ENCODE measurements at regions of chr3 and their contacts with region 1.

Region 1: DNA sequence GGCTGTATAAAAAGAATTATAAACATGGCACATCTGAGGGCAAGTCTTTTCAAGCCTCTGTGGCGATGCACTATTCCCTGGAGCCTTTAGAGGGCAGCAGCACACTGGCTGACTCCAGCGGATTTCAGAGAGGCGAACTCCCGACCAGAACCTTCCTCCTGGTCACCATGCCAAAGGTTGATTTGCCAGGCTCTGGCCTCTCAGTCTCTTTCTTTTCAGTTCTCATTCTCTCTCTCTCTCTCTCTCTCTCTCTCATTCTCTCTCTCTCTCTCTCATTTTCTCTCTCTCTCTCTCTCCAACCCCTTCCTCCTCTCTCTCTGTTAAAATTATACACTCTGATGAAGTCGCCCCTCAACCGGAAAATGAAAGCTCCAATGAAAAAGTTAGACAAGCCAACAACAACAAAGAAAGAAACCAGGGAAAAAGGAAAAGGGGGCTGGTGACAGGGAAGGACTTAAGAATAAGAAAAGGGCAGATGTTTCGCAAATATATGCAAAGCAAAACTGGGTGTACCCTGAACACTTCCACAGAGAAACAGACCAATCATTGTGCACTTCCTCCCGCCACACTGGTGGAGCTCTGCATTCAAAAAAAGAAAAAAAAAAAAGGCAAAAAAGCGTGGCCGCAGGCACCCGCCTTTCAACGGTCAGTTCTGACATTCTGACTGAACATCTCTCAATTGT is 90.2 kb downstream of the TIGIT start:
- DNase-seq: peak; percentile 70 to 80
- ATAC-seq: peak; percentile 84 to 94
- H3K4me3 ChIP-seq: peak overlapping the region; percentile 35 to 61 (median 49)
- H3K27ac ChIP-seq: peak overlapping the region; percentile 69 to 87 (median 75)
- H3K4me1 ChIP-seq: peaks cover 56 to 57% of the 10 kb centered on the region in 2 donors
- H3K27me3 ChIP-seq: no peaks in the 10 kb centered on the region
- CTCF ChIP-seq: peak; percentile 87 to 96 (median 91)
- POLR2A ChIP-seq: peak in 1 of 2 donors; percentile 10

Region 2: DNA sequence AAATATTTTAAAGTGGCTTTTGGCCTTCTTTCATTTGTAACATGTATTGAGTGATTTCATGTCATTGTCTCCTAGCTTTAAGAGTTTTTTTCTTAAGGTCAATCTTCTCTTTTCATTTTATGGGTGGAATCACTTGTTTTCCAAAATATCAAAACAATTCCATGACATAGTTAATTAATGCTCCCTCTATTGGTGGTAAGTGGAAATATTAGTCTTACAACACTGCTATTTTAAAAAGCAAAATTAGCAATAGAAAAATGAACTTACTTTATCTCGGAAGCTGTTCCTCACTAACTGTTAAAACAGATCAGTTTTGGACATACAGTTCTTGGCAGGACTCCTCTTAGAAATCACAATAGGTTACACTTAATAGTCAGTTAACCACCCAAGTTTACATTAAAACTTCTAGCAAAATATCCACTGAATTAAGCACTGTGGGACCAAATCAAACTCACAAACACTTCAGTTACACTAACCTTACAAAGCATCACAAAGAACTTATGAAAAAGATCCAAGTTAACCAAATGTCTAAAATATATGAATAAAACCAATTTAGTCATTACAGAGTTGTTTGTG is 47.8 kb before region 1 on chr3:
- in situ Hi-C with region 1: no loop called
- intact Hi-C with region 1: no loop called
- DNase-seq: no peak
- ATAC-seq: no peak
- H3K4me3 ChIP-seq: no peak overlapping the region
- H3K27ac ChIP-seq: no peak overlapping the region
- H3K4me1 ChIP-seq: peaks cover 0 to 9% of the 10 kb centered on the region in 2 donors
- H3K27me3 ChIP-seq: no peaks in the 10 kb centered on the region
- CTCF ChIP-seq: peak in 2 of 5 experiments; percentile 22 to 41
- POLR2A ChIP-seq: no peak

Region 3: DNA sequence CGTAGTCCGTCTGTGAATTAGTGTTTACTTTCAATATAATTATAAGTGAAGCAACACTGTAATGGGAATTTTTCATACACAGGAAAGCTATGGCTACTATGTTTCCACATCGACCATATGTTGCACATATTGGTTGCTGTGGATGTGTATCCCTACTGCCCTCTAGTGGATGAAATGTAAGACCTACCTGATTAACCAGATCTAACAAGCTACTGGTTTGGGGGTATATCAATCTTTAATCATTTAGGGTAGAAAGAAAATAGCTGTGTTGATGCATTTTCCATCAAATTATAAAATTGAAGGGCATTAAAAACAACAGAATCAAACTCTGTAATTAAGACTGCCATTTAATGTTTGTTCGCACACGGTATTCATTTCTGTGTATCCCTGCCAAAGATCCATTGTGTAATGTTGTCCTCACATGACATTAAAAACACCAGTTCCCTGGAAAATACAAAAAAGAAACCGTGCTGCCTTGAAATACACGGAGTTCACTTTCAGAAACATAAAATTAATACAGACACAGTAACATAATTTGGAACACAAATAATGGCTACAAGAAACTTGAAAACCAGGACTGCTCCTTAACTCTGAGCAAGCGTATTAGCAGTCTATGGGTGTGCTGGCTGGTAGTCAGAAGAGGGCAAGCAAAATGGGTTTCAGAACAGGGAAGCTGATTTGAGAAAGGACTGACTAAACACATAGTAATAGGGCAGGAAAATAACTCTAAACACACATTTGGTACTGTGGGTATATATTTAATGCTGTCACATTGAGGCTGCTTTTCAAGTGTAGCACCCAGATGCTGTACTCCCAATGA is 34.9 kb after region 1 on chr3:
- in situ Hi-C with region 1: no loop called
- intact Hi-C with region 1: loop called (anchors 2 kb)
- DNase-seq: no peak
- ATAC-seq: peak; percentile 78 to 90
- H3K4me3 ChIP-seq: peak overlapping the region; percentile 12 to 48 (median 20)
- H3K27ac ChIP-seq: peak overlapping the region; percentile 53 to 79 (median 72)
- H3K4me1 ChIP-seq: peaks cover 83 to 93% of the 10 kb centered on the region in 2 donors
- H3K27me3 ChIP-seq: no peaks in the 10 kb centered on the region
- CTCF ChIP-seq: peak; percentile 85 to 97 (median 92)
- POLR2A ChIP-seq: no peak

Region 4: DNA sequence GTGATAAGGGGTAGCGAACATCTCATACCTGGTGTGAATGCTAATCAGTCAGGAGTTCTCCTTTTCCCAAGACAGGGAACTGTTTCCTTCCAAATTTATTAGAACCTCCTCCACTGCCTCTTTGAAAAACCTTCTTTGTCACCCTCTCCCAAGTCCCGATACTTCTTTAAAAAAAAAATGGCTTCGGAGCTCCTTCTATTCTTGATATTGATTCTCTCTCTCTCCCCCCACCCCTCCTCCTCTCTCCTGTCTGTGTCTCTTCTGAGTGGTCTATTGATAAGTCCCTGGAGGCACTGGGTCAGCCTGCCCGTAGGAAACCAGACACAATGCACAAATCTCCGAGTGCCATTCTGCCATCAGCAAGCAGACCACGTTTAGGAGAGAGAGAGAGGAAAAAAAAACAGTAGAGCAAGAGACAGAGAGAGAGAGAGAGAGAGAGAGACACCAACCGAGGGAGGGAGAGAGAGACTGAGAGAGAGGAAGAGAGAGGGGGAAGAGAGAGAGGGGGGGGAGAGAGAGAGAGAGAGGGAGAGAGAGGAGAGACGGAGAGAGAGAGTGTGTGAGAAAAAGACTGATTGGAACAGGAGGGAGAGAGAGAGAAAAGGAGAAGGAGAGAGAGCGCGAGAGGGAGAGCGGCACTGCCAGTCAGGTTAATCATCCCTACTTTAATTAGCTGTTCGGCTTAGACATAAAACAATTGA is 70.7 kb after region 1 on chr3:
- in situ Hi-C with region 1: no loop called
- intact Hi-C with region 1: loop called (anchors 5 kb)
- DNase-seq: no peak
- ATAC-seq: peak; percentile 25 to 30
- H3K4me3 ChIP-seq: peak overlapping the region; percentile 54 to 62 (median 54)
- H3K27ac ChIP-seq: peak overlapping the region; percentile 81 to 85 (median 83)
- H3K4me1 ChIP-seq: peaks cover 75 to 88% of the 10 kb centered on the region in 2 donors
- H3K27me3 ChIP-seq: no peaks in the 10 kb centered on the region
- CTCF ChIP-seq: peak in 3 of 5 experiments; percentile 34 to 86 (median 77)
- POLR2A ChIP-seq: no peak

Region 5: DNA sequence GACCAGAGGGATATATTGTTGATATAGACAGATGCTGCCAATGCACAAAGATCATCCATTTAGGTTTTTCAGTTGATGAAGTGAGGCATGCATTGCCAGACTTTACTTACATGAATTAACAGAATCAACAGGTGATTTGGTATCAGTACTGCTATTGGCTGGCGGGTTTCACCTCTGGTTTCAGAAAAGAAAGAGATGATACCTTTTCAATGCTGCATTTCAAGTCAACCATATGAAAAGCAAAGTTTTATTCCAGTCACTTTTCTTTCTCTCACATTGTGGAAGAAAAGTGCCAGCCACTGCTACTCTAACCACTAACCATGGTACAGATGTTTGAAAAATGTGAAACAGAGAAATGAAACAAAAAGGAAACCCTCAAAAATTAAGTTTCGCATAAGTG is 198.9 kb after region 1 on chr3:
- in situ Hi-C with region 1: no loop called
- intact Hi-C with region 1: loop called (anchors 10 kb)
- DNase-seq: no peak
- ATAC-seq: no peak
- H3K4me3 ChIP-seq: no peak overlapping the region
- H3K27ac ChIP-seq: peak overlapping the region in 1 of 4 donors; percentile 11
- H3K4me1 ChIP-seq: peaks cover 40 to 42% of the 10 kb centered on the region in 2 donors
- H3K27me3 ChIP-seq: no peaks in the 10 kb centered on the region
- CTCF ChIP-seq: no peak
- POLR2A ChIP-seq: no peak